ENCODE measurements at regions of chr7 and their contacts with region 1.

Region 1: GRCh38 chr7:140673063-140673773 is 473 bp downstream of the ADCK2 start:
- DNase-seq: no peak
- H3K4me3 ChIP-seq: peak overlapping the region; percentile 64
- H3K27ac ChIP-seq: no peak overlapping the region
- H3K27me3 ChIP-seq: no peaks in the 10 kb centered on the region
- CTCF ChIP-seq: no peak

Region 2: GRCh38 chr7:139660317-139661042 is 1012.7 kb before region 1 on chr7:
- CTCF ChIA-PET with region 1: no interaction called
- POLR2A ChIA-PET with region 1: no interaction called
- DNase-seq: no peak
- H3K4me3 ChIP-seq: no peak overlapping the region
- H3K27ac ChIP-seq: no peak overlapping the region
- H3K27me3 ChIP-seq: no peaks in the 10 kb centered on the region
- CTCF ChIP-seq: no peak

Region 3: DNA sequence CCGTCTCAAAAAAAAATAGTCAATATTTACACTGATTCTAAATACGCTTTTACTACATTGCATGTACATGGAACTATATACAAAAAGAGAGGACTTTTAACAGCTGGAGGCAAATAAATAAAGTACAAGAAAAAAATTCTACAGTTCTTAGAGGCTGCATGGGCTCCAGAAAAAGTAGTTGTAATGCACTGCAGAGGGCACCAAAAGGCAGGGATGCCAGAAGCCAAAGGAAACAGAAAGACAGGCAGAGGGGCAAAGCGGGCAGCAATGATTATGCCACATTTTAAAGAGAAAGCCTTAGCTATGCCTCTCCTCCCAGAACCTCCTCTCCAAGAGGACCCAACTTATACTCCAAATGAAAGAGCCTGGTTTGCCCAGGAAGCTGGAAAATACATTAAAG is 12.1 kb before region 1 on chr7:
- CTCF ChIA-PET with region 1: interaction called, 12 read pairs
- POLR2A ChIA-PET with region 1: no interaction called
- DNase-seq: no peak
- H3K4me3 ChIP-seq: no peak overlapping the region
- H3K27ac ChIP-seq: no peak overlapping the region
- H3K27me3 ChIP-seq: no peaks in the 10 kb centered on the region
- CTCF ChIP-seq: peak; percentile 37

Region 4: DNA sequence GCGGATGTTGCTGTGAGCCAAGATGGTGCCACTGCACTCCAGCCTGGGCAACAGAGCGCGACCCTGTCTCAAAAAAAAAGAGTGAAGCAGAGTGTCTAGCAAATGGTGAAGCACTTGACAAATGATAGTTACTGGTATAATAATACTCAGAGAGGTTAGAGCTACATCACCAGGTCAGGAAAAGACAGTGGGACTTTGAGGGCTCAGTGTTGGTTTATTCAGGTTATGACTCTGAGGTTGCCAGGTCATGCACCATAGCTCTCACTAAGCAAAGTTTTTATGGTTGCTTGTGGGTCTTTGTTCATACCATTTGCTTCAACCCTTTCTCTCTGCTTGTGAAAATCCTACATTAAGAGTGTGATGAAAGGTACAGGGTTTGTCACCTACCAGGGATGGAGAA is 327.9 kb after region 1 on chr7:
- CTCF ChIA-PET with region 1: no interaction called
- POLR2A ChIA-PET with region 1: no interaction called
- DNase-seq: no peak
- H3K4me3 ChIP-seq: no peak overlapping the region
- H3K27ac ChIP-seq: no peak overlapping the region
- H3K27me3 ChIP-seq: no peaks in the 10 kb centered on the region
- CTCF ChIP-seq: no peak

Region 5: GRCh38 chr7:141014524-141015395 is 341.5 kb after region 1 on chr7 and contains the start of gene MRPS33:
- CTCF ChIA-PET with region 1: interaction called, 12 read pairs
- POLR2A ChIA-PET with region 1: no interaction called
- DNase-seq: peak; percentile 90
- H3K4me3 ChIP-seq: peak within 1 kb of the TSS; percentile 88
- H3K27ac ChIP-seq: peak within 1 kb of the TSS; percentile 77
- H3K27me3 ChIP-seq: no peaks in the 10 kb centered on the region
- CTCF ChIP-seq: peak; percentile 35
- polyA plus RNA-seq, gene MRPS33: 80.1 and 99.2 TPM in 2 replicates

Measured in AG04450 (cell line).